ENCODE measurements at regions of chr6 and their contacts with region 1.

Region 1: DNA sequence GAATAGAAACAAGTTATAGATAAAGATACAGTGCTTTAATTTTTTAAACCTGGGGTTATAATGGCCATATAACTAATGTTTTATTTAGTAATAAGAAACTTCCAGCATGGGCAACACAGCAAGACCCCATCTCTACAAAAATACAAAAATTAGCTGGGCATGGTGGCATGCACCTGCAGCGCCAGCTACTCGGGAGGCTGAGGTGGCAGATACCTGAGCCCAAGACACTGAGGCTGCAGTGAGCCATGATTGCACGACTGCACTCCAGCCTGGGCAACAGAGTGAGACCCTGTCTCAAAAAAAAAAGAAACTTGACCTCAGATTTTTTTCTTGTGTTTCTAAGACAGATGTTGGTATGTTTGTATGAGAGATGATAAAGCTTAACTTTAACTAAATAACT is 22.9 kb downstream of the EEF1A1 start:
- DNase-seq: no peak
- CTCF ChIP-seq: no peak

Region 2: DNA sequence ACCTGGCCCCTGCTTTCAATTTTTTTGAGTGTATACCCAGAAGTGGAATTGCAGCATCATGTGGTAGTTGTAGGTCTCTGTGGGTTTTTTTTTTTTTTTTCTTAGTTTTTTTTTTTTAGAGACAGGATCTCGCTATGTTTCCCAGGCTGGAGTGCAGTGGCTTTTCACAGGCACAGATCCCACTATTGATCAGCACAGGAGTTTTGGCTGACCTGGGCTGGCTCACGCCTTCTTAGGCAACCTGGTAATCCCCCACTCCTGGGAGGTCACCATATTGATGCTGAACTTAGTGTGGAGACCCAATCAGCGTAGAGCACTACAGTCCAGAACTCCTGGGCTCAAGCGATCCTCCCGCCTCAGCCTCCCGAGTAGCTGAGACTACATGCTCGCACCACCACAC is 10.4 kb before region 1 on chr6:
- CTCF ChIA-PET with region 1: interaction called, 10 read pairs
- POLR2A ChIA-PET with region 1: no interaction called
- DNase-seq: no peak
- CTCF ChIP-seq: no peak

Region 3: GRCh38 chr6:73508776-73509175 is 10.9 kb after region 1 on chr6:
- CTCF ChIA-PET with region 1: interaction called, 17 read pairs
- POLR2A ChIA-PET with region 1: interaction called, 3 read pairs
- DNase-seq: no peak
- CTCF ChIP-seq: no peak

Region 4: DNA sequence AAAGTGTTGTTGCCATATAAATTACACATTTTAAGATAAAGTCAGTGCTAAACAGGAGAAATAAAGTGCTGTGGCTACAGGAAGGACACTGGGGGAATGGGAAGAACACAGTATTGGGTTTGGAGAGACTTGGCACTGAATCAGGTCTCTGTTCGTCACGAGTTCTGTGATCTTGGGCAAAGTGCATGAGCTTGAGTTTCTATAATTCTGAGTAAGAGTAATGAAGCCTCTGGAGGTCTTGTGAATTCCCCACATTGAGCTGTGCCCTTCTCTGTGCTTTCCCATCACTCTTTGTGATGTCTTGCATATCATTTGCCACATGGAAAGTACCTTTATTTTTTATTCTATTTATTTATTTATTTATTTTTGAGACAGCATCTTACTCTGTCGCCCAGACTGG is 39.8 kb after region 1 on chr6:
- CTCF ChIA-PET with region 1: no interaction called
- POLR2A ChIA-PET with region 1: no interaction called
- DNase-seq: no peak
- CTCF ChIP-seq: no peak

Measured in GM10248 (cell line).